CD4-positive, alpha-beta T cell (primary cell): ENCODE measurements at regions of chr9 and their contacts with region 1.

Region 1: GRCh38 chr9:6538666-6539071 is 106.9 kb downstream of the GLDC start:
- DNase-seq: no peak
- ATAC-seq: no peak
- H3K4me3 ChIP-seq: no peak overlapping the region
- H3K4me3 Mint-ChIP-seq: no peak overlapping the region
- H3K27ac ChIP-seq: no peak overlapping the region
- H3K27ac Mint-ChIP-seq: no peak overlapping the region
- H3K4me1 ChIP-seq: no peaks in the 10 kb centered on the region
- H3K4me1 Mint-ChIP-seq: no peaks in the 10 kb centered on the region
- H3K27me3 ChIP-seq: no peaks in the 10 kb centered on the region
- H3K27me3 Mint-ChIP-seq: peaks cover 9% of the 10 kb centered on the region
- CTCF ChIP-seq: no peak

Region 2: GRCh38 chr9:7443541-7443940 is 904.9 kb after region 1 on chr9:
- CTCF ChIA-PET with region 1: no interaction called
- POLR2A ChIA-PET with region 1: no interaction called
- intact Hi-C with region 1: loop called in 1 of 2 experiments (anchors 5 kb)
- DNase-seq: no peak
- ATAC-seq: no peak
- H3K4me3 ChIP-seq: no peak overlapping the region
- H3K4me3 Mint-ChIP-seq: no peak overlapping the region
- H3K27ac ChIP-seq: no peak overlapping the region
- H3K27ac Mint-ChIP-seq: no peak overlapping the region
- H3K4me1 ChIP-seq: no peaks in the 10 kb centered on the region
- H3K4me1 Mint-ChIP-seq: no peaks in the 10 kb centered on the region
- H3K27me3 ChIP-seq: no peaks in the 10 kb centered on the region
- H3K27me3 Mint-ChIP-seq: no peaks in the 10 kb centered on the region
- CTCF ChIP-seq: no peak